MCF 10A (cell line): ENCODE measurements at regions of chr2 and their contacts with region 1.

Region 1: DNA sequence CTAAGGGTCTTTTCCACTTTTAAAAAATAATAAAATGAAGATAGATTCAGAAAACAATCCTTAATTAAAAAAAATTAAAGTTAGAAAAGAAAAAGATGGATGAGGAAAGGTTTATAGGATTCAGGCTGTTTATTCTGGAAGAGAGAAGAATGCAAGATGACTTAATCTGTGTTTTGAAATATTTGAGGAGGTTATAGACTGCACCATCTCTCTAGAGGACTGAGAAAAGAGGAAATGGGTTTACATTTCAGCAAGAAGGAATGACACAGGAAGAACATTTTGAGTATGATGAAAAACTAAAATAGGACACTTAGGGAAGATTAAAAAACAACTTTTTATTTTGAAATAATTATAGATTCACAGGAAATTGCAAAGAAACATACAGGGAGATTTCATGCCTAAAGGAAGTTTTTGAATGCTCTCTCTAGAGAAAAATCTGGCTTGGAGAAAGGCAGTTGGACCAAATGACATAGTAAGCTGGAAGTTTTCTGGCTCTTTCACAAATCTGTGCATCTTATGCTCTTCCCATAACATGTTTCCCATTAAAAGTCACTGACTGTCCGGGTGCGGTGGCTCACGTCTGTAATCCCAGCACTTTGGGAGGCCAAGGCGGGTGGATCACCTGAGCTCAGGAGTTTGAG is 75.0 kb downstream of the CERS6 start:
- DNase-seq: no peak
- H3K4me3 Mint-ChIP-seq: no peak overlapping the region
- H3K27ac Mint-ChIP-seq: peak overlapping the region; percentile 29
- H3K4me1 Mint-ChIP-seq: peaks cover 56% of the 10 kb centered on the region
- H3K27me3 Mint-ChIP-seq: no peaks in the 10 kb centered on the region
- CTCF ChIP-seq: no peak

Region 2: GRCh38 chr2:168475636-168476035 is 55.5 kb before region 1 on chr2:
- CTCF ChIA-PET with region 1: interaction called, 4 read pairs
- POLR2A ChIA-PET with region 1: interaction called, 11 read pairs
- intact Hi-C with region 1: no loop called
- DNase-seq: peak; percentile 82
- H3K4me3 Mint-ChIP-seq: peak overlapping the region; percentile 39
- H3K27ac Mint-ChIP-seq: peak overlapping the region; percentile 40
- H3K4me1 Mint-ChIP-seq: peaks cover 24% of the 10 kb centered on the region
- H3K27me3 Mint-ChIP-seq: no peaks in the 10 kb centered on the region
- CTCF ChIP-seq: no peak

Region 3: DNA sequence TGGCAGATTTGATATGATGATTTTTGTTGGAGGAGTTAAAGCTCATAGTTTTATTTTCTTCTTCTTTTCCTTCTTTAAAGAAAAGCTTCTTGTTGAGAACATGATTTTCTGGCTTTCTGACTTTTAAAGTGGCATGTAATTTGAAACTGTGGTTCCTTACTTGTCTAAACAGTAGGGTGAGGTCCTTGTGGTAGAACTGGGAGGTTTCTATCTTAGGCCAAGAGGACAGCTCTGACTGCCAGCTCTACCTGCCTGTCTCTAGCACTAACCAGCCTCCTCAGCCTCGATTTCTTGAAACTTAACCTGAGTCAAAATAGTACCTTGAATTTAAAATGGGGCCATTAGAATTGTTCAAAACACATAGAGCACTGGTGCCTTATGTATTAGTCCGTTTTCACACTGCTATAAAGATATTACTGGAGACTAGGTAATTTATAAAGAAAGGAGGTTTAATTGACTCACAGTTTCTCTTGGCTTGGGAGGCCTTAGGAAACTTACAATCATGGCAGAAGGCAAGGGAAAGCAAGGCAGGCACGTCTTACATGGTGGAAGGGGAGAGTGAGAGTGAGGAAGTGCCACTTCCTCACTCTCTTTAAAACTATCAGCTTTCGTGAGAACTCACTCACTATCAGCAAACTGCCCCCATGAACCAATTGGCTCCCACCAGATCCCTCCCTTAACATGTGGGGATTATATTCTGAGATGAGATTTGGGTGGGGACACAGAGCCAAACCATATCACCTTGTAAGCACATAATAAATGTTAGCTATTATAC is 43.9 kb after region 1 on chr2:
- CTCF ChIA-PET with region 1: no interaction called
- POLR2A ChIA-PET with region 1: no interaction called
- intact Hi-C with region 1: no loop called
- DNase-seq: peak; percentile 9
- H3K4me3 Mint-ChIP-seq: no peak overlapping the region
- H3K27ac Mint-ChIP-seq: no peak overlapping the region
- H3K4me1 Mint-ChIP-seq: peaks cover 25% of the 10 kb centered on the region
- H3K27me3 Mint-ChIP-seq: no peaks in the 10 kb centered on the region
- CTCF ChIP-seq: no peak